CD4-positive, alpha-beta memory T cell (primary cell): ENCODE measurements at regions of chr12 and their contacts with region 1.

Region 1: DNA sequence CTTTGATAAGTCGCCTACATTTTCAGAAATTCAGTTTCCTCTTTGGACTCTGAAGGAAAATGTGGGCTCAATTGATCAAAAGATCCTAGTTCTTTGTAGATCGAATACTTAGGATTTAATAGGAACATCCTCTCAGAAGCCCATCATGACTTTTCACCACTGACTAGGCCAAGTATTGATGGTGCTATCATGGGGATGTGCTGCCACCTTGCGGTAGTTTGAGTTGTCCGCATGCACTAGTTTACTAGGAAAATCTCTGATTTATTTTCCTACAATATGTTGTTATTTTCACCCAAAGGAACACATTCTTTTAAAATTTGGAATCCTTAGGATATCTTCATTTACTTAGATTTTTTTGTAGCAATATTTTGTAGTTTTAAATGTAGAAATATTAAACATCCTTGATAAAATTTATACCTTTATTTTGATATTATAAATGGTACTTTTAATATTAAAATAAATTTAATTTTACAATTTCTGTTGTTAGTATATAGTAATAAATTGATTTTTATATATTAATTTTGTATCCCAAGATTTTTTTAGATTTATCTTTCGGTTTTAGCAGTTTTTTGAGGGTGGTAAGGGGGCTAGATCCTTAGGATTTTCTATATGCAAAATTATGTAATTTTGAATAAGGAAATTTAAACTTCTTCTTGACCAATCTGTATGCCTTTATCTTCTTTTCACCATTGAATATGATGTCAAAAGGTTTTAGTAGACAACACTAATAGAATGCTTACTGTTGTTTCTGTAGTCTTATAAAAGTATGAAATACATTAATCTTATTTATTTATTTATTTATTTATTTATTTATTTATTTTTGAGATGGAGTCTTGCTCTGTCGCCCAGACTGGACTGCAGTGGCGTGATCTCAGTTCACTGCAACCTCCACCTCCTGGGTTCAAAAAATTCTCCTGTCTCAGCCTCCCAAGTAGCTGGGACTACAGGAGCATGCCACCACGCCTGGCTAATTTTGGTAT is 52.9 kb upstream of the OR9K2 start:
- DNase-seq: peak; percentile 69 to 79 (median 71)
- H3K4me3 ChIP-seq: no peak overlapping the region
- H3K4me3 Mint-ChIP-seq: no peak overlapping the region
- H3K27ac ChIP-seq: no peak overlapping the region
- H3K27ac Mint-ChIP-seq: peak overlapping the region in 1 of 7 donors; percentile 24
- H3K4me1 ChIP-seq: no peaks in the 10 kb centered on the region
- H3K4me1 Mint-ChIP-seq: peaks cover 0 to 3% (median 1%) of the 10 kb centered on the region in 4 donors
- H3K27me3 ChIP-seq: peaks cover 5% of the 10 kb centered on the region
- H3K27me3 Mint-ChIP-seq: peaks cover 10 to 30% of the 10 kb centered on the region in 2 donors

Region 2: GRCh38 chr12:54701940-54702592 is 371.3 kb before region 1 on chr12:
- CTCF ChIA-PET with region 1: interaction called, 57 read pairs
- POLR2A ChIA-PET with region 1: no interaction called
- intact Hi-C with region 1: loop called (anchors 1 kb)
- DNase-seq: peak in 4 of 5 donors; percentile 48 to 55 (median 54)
- H3K4me3 ChIP-seq: no peak overlapping the region
- H3K4me3 Mint-ChIP-seq: no peak overlapping the region
- H3K27ac ChIP-seq: no peak overlapping the region
- H3K27ac Mint-ChIP-seq: no peak overlapping the region
- H3K4me1 ChIP-seq: no peaks in the 10 kb centered on the region
- H3K4me1 Mint-ChIP-seq: no peaks in the 10 kb centered on the region
- H3K27me3 ChIP-seq: no peaks in the 10 kb centered on the region
- H3K27me3 Mint-ChIP-seq: peaks cover 5 to 6% of the 10 kb centered on the region in 2 donors

Region 3: DNA sequence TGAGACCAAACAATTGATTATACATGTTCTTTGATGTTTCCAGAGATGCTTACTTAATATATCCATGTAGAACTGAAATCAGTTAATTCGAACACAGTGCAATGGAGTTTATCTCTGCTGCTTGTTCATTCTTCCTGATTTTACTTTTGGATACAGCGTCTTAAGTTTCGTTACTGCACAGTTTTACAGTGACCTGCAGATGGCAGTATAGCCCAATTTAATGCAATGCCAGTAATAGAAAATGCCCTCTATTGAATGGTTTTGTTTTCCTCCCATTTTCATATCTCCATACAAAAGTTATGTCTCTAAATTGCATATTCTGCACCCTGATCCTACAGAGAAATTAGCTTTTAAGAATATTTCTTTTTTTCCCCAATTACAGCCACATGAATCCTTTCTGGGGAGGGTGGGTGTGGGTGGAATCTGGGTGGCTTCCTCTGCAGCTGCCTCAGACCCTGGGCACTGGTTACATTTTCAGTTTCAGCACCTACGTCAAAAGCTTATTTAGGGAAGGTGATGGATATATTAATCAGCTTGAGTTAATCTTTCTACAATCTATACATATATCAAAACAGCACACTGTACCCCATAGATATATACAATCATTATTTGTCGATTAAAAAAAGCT is 324.0 kb before region 1 on chr12:
- CTCF ChIA-PET with region 1: interaction called, 129 read pairs
- POLR2A ChIA-PET with region 1: interaction called, 14 read pairs
- intact Hi-C with region 1: loop called (anchors 1 kb)
- DNase-seq: peak; percentile 41 to 65 (median 59)
- H3K4me3 ChIP-seq: no peak overlapping the region
- H3K4me3 Mint-ChIP-seq: peak overlapping the region in 7 of 8 donors; percentile 50 to 73 (median 68)
- H3K27ac ChIP-seq: no peak overlapping the region
- H3K27ac Mint-ChIP-seq: peak overlapping the region in 2 of 7 donors; percentile 48 to 63
- H3K4me1 ChIP-seq: peaks cover 18% of the 10 kb centered on the region
- H3K4me1 Mint-ChIP-seq: peaks cover 13 to 40% (median 21%) of the 10 kb centered on the region in 4 donors
- H3K27me3 ChIP-seq: no peaks in the 10 kb centered on the region
- H3K27me3 Mint-ChIP-seq: no peaks in the 10 kb centered on the region

Region 4: DNA sequence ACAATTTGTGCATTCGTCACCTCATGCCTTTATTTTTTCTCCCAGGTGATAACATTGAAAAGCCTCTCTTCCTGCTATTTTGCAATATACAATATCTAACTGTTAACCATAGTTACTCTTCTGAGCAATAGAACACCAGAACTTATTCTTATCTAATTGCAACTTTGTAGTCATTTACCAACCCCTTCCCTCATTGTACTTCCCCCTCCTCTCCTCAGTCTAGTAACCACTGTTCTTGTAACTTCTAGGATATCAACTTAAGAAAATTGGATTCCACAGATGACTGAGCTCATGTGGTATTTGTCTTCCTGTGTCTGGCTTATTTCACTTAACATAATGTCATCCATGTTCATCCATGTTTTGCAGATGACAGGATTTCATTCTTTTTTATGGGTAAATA is 211.4 kb before region 1 on chr12:
- CTCF ChIA-PET with region 1: interaction called, 13 read pairs
- POLR2A ChIA-PET with region 1: no interaction called
- intact Hi-C with region 1: no loop called
- DNase-seq: no peak
- H3K4me3 ChIP-seq: no peak overlapping the region
- H3K4me3 Mint-ChIP-seq: no peak overlapping the region
- H3K27ac ChIP-seq: no peak overlapping the region
- H3K27ac Mint-ChIP-seq: no peak overlapping the region
- H3K4me1 ChIP-seq: no peaks in the 10 kb centered on the region
- H3K4me1 Mint-ChIP-seq: no peaks in the 10 kb centered on the region
- H3K27me3 ChIP-seq: no peaks in the 10 kb centered on the region
- H3K27me3 Mint-ChIP-seq: peaks cover 4 to 14% of the 10 kb centered on the region in 2 donors

Region 5: DNA sequence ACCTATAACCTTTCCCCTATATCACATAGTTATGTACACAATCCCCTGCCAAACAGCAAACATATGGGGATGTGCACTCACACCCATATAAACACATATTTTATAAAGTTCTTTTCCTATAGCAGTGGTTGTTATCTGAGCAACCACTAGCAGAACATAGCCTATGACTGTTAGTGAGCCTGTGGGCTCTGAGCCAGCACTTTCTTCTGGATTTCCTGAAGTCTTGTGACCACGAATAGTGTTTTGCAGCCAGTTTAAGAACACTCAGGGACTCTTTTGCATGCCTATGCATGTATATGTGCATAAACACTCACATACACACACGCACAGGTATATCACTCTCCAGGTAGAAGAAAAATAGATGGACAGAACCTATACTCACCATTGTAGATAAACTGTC is 105.9 kb before region 1 on chr12:
- CTCF ChIA-PET with region 1: interaction called, 26 read pairs
- POLR2A ChIA-PET with region 1: no interaction called
- intact Hi-C with region 1: no loop called
- DNase-seq: peak in 1 of 5 donors; percentile 59
- H3K4me3 ChIP-seq: no peak overlapping the region
- H3K4me3 Mint-ChIP-seq: peak overlapping the region in 7 of 8 donors; percentile 56 to 84 (median 80)
- H3K27ac ChIP-seq: peak overlapping the region; percentile 46
- H3K27ac Mint-ChIP-seq: peak overlapping the region; percentile 58 to 94 (median 87)
- H3K4me1 ChIP-seq: peaks cover 74% of the 10 kb centered on the region
- H3K4me1 Mint-ChIP-seq: peaks cover 59 to 91% (median 79%) of the 10 kb centered on the region in 4 donors
- H3K27me3 ChIP-seq: no peaks in the 10 kb centered on the region
- H3K27me3 Mint-ChIP-seq: no peaks in the 10 kb centered on the region

Region 6: DNA sequence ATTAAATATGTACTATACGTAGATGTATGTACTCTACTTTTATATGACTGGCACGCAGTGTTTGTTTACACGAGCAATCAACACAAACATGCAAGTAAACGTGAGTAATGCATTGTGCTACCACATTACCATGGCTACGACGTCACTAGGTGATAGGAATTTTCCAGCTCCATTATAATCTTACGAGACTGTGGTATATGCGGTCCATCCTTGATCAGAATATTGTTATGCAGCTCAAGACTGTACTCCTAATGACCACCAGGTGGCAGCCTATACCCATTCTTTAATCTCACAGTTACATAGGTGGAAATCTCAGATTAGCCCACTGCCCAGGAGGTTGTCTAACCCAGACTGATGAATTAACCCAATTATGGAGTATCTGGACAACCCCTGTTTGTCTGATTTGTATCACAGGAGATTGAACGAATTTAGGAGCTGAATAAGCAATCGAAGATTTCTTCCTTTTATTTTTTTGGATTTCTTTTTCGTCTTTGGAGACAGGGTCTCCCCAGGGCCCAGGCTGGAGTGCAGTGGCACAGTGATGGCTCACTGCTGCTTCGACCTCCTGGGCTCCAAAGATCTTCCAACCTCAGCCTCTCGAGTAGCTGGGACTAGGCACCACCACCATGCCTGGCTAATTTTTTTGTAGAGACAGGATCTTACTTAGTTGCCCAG is 80.0 kb before region 1 on chr12:
- CTCF ChIA-PET with region 1: interaction called, 751 read pairs
- POLR2A ChIA-PET with region 1: interaction called, 41 read pairs
- intact Hi-C with region 1: loop called (anchors 1 kb)
- DNase-seq: peak; percentile 71 to 87 (median 73)
- H3K4me3 ChIP-seq: no peak overlapping the region
- H3K4me3 Mint-ChIP-seq: peak overlapping the region in 3 of 8 donors; percentile 12 to 22 (median 15)
- H3K27ac ChIP-seq: no peak overlapping the region
- H3K27ac Mint-ChIP-seq: peak overlapping the region in 2 of 7 donors; percentile 32 to 36
- H3K4me1 ChIP-seq: peaks cover 46% of the 10 kb centered on the region
- H3K4me1 Mint-ChIP-seq: peaks cover 36 to 49% (median 39%) of the 10 kb centered on the region in 4 donors
- H3K27me3 ChIP-seq: no peaks in the 10 kb centered on the region
- H3K27me3 Mint-ChIP-seq: no peaks in the 10 kb centered on the region

Region 7: DNA sequence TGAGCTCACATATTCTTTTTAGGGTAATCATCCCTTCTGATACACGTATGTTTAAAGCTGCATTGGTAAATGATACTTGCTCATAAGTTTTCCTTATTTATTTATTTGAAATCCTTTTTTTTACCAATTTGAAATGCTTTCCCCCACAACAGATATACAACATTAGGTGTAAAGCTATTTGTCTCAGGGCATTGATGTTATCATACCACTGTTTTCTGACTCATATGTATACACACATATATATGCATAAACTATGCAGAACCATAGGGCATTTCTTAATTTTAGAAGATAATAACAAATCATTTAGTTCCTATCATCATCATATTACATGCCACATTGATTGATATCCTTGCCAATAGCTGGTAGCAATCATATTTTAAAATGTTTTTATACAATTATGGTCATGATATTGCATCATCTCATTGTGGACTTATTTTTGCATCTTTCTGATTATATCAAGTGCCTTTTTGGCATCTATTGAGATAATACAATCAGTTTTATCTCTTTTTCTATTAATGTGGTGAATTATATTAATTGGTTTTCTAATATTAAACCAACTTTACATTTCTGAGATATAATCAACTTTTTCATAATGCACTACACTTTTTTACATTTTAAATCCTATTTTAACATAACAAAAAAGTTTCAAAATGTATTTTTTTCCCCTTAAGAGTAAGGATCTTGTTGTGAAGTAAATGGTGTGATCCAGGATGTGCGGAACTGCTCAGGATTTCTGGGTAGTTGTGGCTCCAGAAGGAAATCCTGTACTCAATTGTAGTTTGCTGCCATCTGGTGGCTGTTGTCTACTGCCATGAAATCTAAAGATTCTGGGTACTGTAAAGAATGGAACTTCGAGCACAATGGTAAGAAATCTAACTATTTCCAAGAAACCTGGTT is 69.6 kb after region 1 on chr12:
- CTCF ChIA-PET with region 1: interaction called, 3 read pairs
- POLR2A ChIA-PET with region 1: no interaction called
- intact Hi-C with region 1: loop called (anchors 5 kb)
- DNase-seq: peak in 4 of 5 donors; percentile 17 to 33 (median 26)
- H3K4me3 ChIP-seq: no peak overlapping the region
- H3K4me3 Mint-ChIP-seq: no peak overlapping the region
- H3K27ac ChIP-seq: no peak overlapping the region
- H3K27ac Mint-ChIP-seq: no peak overlapping the region
- H3K4me1 ChIP-seq: no peaks in the 10 kb centered on the region
- H3K4me1 Mint-ChIP-seq: peaks cover 0 to 5% (median 2%) of the 10 kb centered on the region in 4 donors
- H3K27me3 ChIP-seq: no peaks in the 10 kb centered on the region
- H3K27me3 Mint-ChIP-seq: peaks cover 5 to 6% of the 10 kb centered on the region in 2 donors